ENCODE measurements at regions of chr14 and their contacts with region 1.

Region 1: GRCh38 chr14:32076278-32077080 is 625 bp upstream of the ARHGAP5 start:
- DNase-seq: peak; percentile 96
- H3K4me3 ChIP-seq: peak overlapping the region; percentile 94
- H3K27ac ChIP-seq: peak overlapping the region; percentile 99
- H3K4me1 ChIP-seq: peaks cover 74% of the 10 kb centered on the region
- H3K27me3 ChIP-seq: no peaks in the 10 kb centered on the region
- CTCF ChIP-seq: no peak

Region 2: GRCh38 chr14:31419967-31420318 is 656.5 kb before region 1 on chr14:
- intact Hi-C with region 1: loop called (anchors 10 kb)
- DNase-seq: peak; percentile 63
- H3K4me3 ChIP-seq: peak overlapping the region; percentile 97
- H3K27ac ChIP-seq: peak overlapping the region; percentile 95
- H3K4me1 ChIP-seq: peaks cover 45% of the 10 kb centered on the region
- H3K27me3 ChIP-seq: no peaks in the 10 kb centered on the region
- CTCF ChIP-seq: no peak

Region 3: GRCh38 chr14:31893221-31893757 is 183.2 kb before region 1 on chr14:
- intact Hi-C with region 1: no loop called
- DNase-seq: no peak
- H3K4me3 ChIP-seq: no peak overlapping the region
- H3K27ac ChIP-seq: peak overlapping the region; percentile 75
- H3K4me1 ChIP-seq: peaks cover 44% of the 10 kb centered on the region
- H3K27me3 ChIP-seq: no peaks in the 10 kb centered on the region
- CTCF ChIP-seq: no peak

Region 4: GRCh38 chr14:32121948-32122347 is 45.5 kb after region 1 on chr14:
- intact Hi-C with region 1: no loop called
- DNase-seq: no peak
- H3K4me3 ChIP-seq: no peak overlapping the region
- H3K27ac ChIP-seq: no peak overlapping the region
- H3K4me1 ChIP-seq: peaks cover 63% of the 10 kb centered on the region
- H3K27me3 ChIP-seq: no peaks in the 10 kb centered on the region
- CTCF ChIP-seq: no peak

Region 5: DNA sequence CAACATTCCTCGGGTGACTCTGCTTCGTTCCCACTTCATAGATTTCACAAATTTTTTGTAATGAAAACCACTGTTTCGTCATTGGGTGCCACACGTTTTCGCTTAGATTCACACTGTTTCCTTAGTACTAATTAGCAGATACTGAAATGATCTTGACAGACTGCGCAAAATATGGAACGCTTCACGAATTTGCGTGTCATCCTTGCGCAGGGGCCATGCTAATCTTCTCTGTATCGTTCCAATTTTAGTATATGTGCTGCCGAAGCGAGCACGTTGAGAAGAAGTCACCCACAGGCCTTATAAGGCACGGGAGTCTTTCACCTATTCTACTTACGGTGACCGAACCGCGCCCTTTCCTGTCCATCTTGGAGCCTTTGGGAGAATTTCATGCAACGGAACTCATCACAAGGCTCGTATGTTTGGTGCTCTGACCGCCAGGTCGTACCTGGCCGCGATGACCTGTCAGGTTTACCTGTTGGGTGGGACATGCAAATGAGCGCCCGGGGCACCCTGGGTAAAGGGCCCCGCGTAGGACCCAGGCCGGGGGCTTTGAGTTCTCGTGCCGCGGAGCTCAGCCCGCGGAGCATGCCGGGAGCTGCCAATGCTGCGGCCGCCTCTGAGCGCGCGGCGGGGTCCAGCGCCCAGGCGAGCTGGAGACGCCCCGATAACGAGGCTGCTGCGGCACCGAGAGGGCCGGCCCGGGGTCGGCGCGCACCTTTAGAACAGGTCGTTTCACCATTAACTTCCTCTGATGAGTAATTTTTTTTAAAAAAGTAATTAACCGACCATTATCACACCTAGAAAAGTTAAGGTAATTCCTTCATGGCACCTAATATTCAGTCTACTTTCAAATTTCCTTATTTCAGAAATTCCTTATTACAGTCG is 126.8 kb after region 1 on chr14 and contains the start of gene RNU6-8:
- intact Hi-C with region 1: loop called (anchors 5 kb)
- DNase-seq: peak; percentile 86
- H3K4me3 ChIP-seq: peak within 1 kb of the TSS; percentile 77
- H3K27ac ChIP-seq: peak within 1 kb of the TSS; percentile 90
- H3K4me1 ChIP-seq: peaks cover 42% of the 10 kb centered on the region
- H3K27me3 ChIP-seq: no peaks in the 10 kb centered on the region
- CTCF ChIP-seq: peak; percentile 15
- total RNA-seq, gene RNU6-8: not detected

Region 6: GRCh38 chr14:32252030-32252670 is 175.7 kb after region 1 on chr14:
- intact Hi-C with region 1: loop called (anchors 5 kb)
- DNase-seq: no peak
- H3K4me3 ChIP-seq: no peak overlapping the region
- H3K27ac ChIP-seq: peak overlapping the region; percentile 46
- H3K4me1 ChIP-seq: peaks cover 44% of the 10 kb centered on the region
- H3K27me3 ChIP-seq: no peaks in the 10 kb centered on the region
- CTCF ChIP-seq: peak; percentile 89

Region 7: GRCh38 chr14:32286602-32287001 is 210.1 kb after region 1 on chr14:
- intact Hi-C with region 1: no loop called
- DNase-seq: no peak
- H3K4me3 ChIP-seq: no peak overlapping the region
- H3K27ac ChIP-seq: no peak overlapping the region
- H3K4me1 ChIP-seq: no peaks in the 10 kb centered on the region
- H3K27me3 ChIP-seq: no peaks in the 10 kb centered on the region
- CTCF ChIP-seq: no peak

Region 8: GRCh38 chr14:32350020-32350419 is 273.5 kb after region 1 on chr14:
- intact Hi-C with region 1: no loop called
- DNase-seq: no peak
- H3K4me3 ChIP-seq: no peak overlapping the region
- H3K27ac ChIP-seq: no peak overlapping the region
- H3K4me1 ChIP-seq: peaks cover 5% of the 10 kb centered on the region
- H3K27me3 ChIP-seq: no peaks in the 10 kb centered on the region
- CTCF ChIP-seq: no peak